ENCODE measurements at regions of chr4 and their contacts with region 1.

Region 1: GRCh38 chr4:53189011-53189410 is 176.8 kb downstream of the SCFD2 start:
- DNase-seq: no peak
- H3K4me3 ChIP-seq: no peak overlapping the region
- H3K27ac ChIP-seq: peak overlapping the region; percentile 35 to 74
- H3K4me1 ChIP-seq: peaks cover 9 to 19% of the 10 kb centered on the region in 2 donors
- H3K27me3 ChIP-seq: no peaks in the 10 kb centered on the region
- CTCF ChIP-seq: no peak

Region 2: GRCh38 chr4:53015681-53016080 is 173.3 kb before region 1 on chr4:
- intact Hi-C with region 1: loop called (anchors 5 kb)
- DNase-seq: no peak
- H3K4me3 ChIP-seq: no peak overlapping the region
- H3K27ac ChIP-seq: peak overlapping the region in 1 of 2 donors; percentile 27
- H3K4me1 ChIP-seq: peaks cover 0 to 54% of the 10 kb centered on the region in 2 donors
- H3K27me3 ChIP-seq: no peaks in the 10 kb centered on the region
- CTCF ChIP-seq: peak; percentile 57 to 78 (median 76)

Region 3: GRCh38 chr4:53132132-53132896 is 56.7 kb before region 1 on chr4:
- intact Hi-C with region 1: loop called (anchors 10 kb)
- DNase-seq: no peak
- H3K4me3 ChIP-seq: peak overlapping the region in 1 of 2 donors; percentile 28
- H3K27ac ChIP-seq: peak overlapping the region; percentile 15 to 64
- H3K4me1 ChIP-seq: peaks cover 4 to 13% of the 10 kb centered on the region in 2 donors
- H3K27me3 ChIP-seq: no peaks in the 10 kb centered on the region
- CTCF ChIP-seq: no peak

Region 4: DNA sequence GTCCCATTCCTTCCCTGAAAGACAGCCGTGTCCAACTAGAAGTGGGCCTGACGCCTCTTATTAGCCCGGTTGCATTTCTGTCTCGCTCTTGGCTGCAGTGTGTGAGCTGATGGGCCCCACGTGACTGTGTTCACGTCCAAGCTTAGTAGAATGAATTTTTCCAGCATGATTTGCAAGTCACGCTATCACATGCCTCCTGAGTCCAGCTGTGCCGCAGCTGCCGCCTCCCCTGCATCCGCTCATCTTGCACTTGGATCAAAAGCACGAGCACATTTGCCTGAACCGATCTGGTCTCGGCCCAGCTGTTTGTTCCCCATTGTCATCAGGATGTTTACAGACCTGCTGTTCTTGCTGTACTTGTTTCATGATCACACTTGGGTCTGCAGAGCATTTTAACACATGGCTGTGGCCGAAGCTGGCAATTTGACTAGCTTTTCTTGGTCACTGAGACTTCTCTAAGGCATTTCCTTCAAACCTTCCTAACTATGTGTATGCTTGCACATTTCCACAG is 1595.2 kb after region 1 on chr4:
- intact Hi-C with region 1: loop called (anchors 10 kb)
- DNase-seq: peak; percentile 76 to 95
- H3K4me3 ChIP-seq: peak overlapping the region in 1 of 2 donors; percentile 37
- H3K27ac ChIP-seq: peak overlapping the region; percentile 77 to 83
- H3K4me1 ChIP-seq: peaks cover 0 to 26% of the 10 kb centered on the region in 2 donors
- H3K27me3 ChIP-seq: no peaks in the 10 kb centered on the region
- CTCF ChIP-seq: no peak